OCI-LY7 (cell line): ENCODE measurements at regions of chr9 and their contacts with region 1.

Region 1: GRCh38 chr9:83622939-83623678 is at the start of gene IDNK:
- DNase-seq: peak; percentile 77
- H3K4me3 ChIP-seq: peak within 1 kb of the TSS; percentile 72
- H3K27ac ChIP-seq: peak within 1 kb of the TSS; percentile 56
- H3K4me1 ChIP-seq: peaks cover 22% of the 10 kb centered on the region
- CTCF ChIP-seq: no peak
- total RNA-seq, gene IDNK: 3.1 and 3.7 TPM in 2 replicates

Region 2: GRCh38 chr9:83144492-83144891 is 478.6 kb before region 1 on chr9:
- CTCF ChIA-PET with region 1: no interaction called
- POLR2A ChIA-PET with region 1: no interaction called
- intact Hi-C with region 1: no loop called
- DNase-seq: no peak
- H3K4me3 ChIP-seq: no peak overlapping the region
- H3K27ac ChIP-seq: no peak overlapping the region
- H3K4me1 ChIP-seq: no peaks in the 10 kb centered on the region
- CTCF ChIP-seq: no peak

Region 3: DNA sequence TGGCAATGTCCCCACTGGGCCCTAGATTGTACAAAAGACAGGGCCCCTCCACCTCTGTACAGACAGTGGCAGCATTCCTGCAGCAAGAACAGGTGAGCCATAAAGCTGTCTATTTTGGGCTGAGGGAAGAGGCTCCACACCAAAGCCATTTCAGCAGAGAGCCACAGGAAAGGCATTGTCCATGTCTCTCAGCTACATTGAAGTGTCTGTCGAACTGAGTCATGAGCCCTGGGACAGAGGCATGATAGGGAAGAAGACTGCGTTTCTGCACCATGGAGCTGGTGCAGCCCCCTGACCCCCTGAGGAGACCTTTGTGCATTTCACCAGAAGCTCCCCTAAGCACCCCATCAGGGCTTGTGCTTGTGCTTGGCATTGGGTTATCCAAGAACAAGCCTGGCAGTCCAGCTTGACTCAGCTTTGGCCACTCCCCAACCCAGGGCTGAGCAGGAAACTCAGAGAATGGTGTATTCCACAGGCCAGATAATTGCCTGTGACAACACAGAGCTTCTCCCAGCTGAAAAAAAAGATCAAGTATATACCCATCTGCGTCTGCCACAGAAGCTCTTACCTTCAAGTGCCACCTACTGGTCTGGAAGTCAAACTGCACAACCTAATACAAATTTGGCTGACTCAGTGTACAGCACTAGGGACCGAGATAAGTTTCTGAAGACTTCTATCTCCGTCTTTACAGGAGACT is 79.0 kb before region 1 on chr9:
- CTCF ChIA-PET with region 1: no interaction called
- POLR2A ChIA-PET with region 1: no interaction called
- intact Hi-C with region 1: no loop called
- DNase-seq: peak; percentile 53
- H3K4me3 ChIP-seq: no peak overlapping the region
- H3K27ac ChIP-seq: no peak overlapping the region
- H3K4me1 ChIP-seq: no peaks in the 10 kb centered on the region
- CTCF ChIP-seq: peak; percentile 86

Region 4: DNA sequence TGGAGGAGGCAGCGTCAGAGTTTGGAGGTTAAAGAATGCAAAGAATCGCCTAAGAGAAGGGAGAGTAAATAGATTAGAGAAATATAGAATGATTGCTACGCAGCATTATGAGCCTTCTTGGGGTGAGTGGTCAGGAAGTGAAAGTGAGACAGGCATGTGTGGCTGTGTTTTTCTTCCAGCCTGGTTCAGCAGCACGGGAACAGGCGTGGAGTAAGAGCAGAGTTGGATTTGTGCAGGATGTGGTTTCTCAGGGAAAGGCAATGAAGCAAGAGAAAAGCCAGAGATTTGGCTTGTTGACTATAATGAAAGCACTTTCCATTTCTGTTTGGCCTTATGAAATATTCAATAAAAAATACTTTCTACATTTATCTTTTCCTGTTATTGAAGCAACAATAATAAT is 50.6 kb before region 1 on chr9:
- CTCF ChIA-PET with region 1: no interaction called
- POLR2A ChIA-PET with region 1: no interaction called
- intact Hi-C with region 1: no loop called
- DNase-seq: no peak
- H3K4me3 ChIP-seq: no peak overlapping the region
- H3K27ac ChIP-seq: no peak overlapping the region
- H3K4me1 ChIP-seq: no peaks in the 10 kb centered on the region
- CTCF ChIP-seq: no peak

Region 5: GRCh38 chr9:83649080-83649479 is 26.0 kb after region 1 on chr9:
- CTCF ChIA-PET with region 1: interaction called, 3 read pairs
- POLR2A ChIA-PET with region 1: interaction called, 4 read pairs
- intact Hi-C with region 1: loop called (anchors 2 kb)
- DNase-seq: peak; percentile 62
- H3K4me3 ChIP-seq: no peak overlapping the region
- H3K27ac ChIP-seq: no peak overlapping the region
- H3K4me1 ChIP-seq: no peaks in the 10 kb centered on the region
- CTCF ChIP-seq: peak; percentile 78

Region 6: GRCh38 chr9:83662933-83663332 is 39.8 kb after region 1 on chr9:
- CTCF ChIA-PET with region 1: no interaction called
- POLR2A ChIA-PET with region 1: interaction called, 10 read pairs
- intact Hi-C with region 1: no loop called
- DNase-seq: no peak
- H3K4me3 ChIP-seq: no peak overlapping the region
- H3K27ac ChIP-seq: no peak overlapping the region
- H3K4me1 ChIP-seq: peaks cover 24% of the 10 kb centered on the region
- CTCF ChIP-seq: no peak

Region 7: GRCh38 chr9:83707768-83708514 is 84.8 kb after region 1 on chr9 and contains the start of gene UBQLN1:
- CTCF ChIA-PET with region 1: no interaction called
- POLR2A ChIA-PET with region 1: interaction called, 19 read pairs
- intact Hi-C with region 1: loop called (anchors 1 kb)
- DNase-seq: peak; percentile 95
- H3K4me3 ChIP-seq: peak within 1 kb of the TSS; percentile 89
- H3K27ac ChIP-seq: peak within 1 kb of the TSS; percentile 85
- H3K4me1 ChIP-seq: peaks cover 37% of the 10 kb centered on the region
- CTCF ChIP-seq: no peak
- total RNA-seq, gene UBQLN1: 83.9 and 115 TPM in 2 replicates

Region 8: GRCh38 chr9:83920927-83921707 is 298.0 kb after region 1 on chr9 and contains the start of gene KIF27:
- CTCF ChIA-PET with region 1: no interaction called
- POLR2A ChIA-PET with region 1: interaction called, 4 read pairs
- intact Hi-C with region 1: loop called (anchors 2 kb)
- DNase-seq: peak; percentile 95
- H3K4me3 ChIP-seq: peak within 1 kb of the TSS; percentile 80
- H3K27ac ChIP-seq: peak within 1 kb of the TSS; percentile 68
- H3K4me1 ChIP-seq: peaks cover 22% of the 10 kb centered on the region
- CTCF ChIP-seq: peak; percentile 70
- total RNA-seq, gene KIF27: 5.6 and 6.0 TPM in 2 replicates